ENCODE measurements at regions of chr6 and their contacts with region 1.

Region 1: GRCh38 chr6:83514866-83515466 is 2.6 kb downstream of the PRSS35 start:
- DNase-seq: peak; percentile 38
- CTCF ChIP-seq: peak; percentile 82

Region 2: DNA sequence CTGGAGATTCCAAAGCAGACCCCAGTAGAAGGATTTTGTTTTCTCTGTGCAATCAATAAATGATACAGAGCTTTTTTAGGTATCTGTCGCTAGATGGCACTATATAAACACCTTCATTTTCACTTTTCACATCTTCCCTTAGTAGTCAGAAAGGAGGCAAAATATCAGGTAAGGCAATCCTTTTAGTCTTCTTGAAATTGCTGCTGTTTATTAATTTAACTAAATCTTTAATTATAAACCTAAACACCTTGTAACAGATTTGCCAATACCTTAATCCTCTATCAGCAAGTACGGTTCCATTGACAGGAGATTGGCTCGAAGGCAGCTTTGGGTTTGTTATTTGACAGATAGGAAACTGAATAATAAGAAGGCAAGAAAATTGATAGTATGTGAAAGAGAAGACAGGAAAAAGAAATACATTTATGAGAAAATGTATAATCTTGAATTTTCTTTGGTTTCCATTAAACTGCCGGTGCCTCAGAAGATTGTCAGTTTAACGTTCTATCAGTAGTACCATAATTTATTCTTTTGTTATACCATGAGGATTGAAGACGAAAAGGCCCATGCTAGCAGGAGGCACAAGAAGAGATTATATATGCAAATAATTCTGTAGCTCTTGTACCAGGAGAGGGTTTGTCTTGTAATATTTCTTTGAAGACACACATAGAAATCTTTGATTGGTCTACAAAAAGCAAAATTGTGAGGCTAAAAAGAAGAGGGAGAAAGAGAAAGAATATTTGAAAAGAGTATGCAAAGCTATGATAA is 1243.9 kb before region 1 on chr6:
- in situ Hi-C with region 1: loop called (anchors 25 kb)
- DNase-seq: peak; percentile 43
- CTCF ChIP-seq: peak; percentile 63

Region 3: GRCh38 chr6:83067448-83068413 is 447.2 kb before region 1 on chr6 and contains the start of gene DOP1A:
- in situ Hi-C with region 1: loop called (anchors 25 kb)
- DNase-seq: peak; percentile 94
- CTCF ChIP-seq: peak; percentile 97

Region 4: GRCh38 chr6:83231146-83231545 is 283.8 kb before region 1 on chr6:
- in situ Hi-C with region 1: loop called (anchors 10 kb)
- DNase-seq: no peak
- CTCF ChIP-seq: no peak

Region 5: GRCh38 chr6:83417880-83418663 is 96.9 kb before region 1 on chr6:
- in situ Hi-C with region 1: loop called (anchors 25 kb)
- DNase-seq: peak; percentile 24
- CTCF ChIP-seq: peak; percentile 41

Measured in GM13977 (cell line).